HepG2 (cell line): ENCODE measurements at regions of chr10 and their contacts with region 1.

Region 1: DNA sequence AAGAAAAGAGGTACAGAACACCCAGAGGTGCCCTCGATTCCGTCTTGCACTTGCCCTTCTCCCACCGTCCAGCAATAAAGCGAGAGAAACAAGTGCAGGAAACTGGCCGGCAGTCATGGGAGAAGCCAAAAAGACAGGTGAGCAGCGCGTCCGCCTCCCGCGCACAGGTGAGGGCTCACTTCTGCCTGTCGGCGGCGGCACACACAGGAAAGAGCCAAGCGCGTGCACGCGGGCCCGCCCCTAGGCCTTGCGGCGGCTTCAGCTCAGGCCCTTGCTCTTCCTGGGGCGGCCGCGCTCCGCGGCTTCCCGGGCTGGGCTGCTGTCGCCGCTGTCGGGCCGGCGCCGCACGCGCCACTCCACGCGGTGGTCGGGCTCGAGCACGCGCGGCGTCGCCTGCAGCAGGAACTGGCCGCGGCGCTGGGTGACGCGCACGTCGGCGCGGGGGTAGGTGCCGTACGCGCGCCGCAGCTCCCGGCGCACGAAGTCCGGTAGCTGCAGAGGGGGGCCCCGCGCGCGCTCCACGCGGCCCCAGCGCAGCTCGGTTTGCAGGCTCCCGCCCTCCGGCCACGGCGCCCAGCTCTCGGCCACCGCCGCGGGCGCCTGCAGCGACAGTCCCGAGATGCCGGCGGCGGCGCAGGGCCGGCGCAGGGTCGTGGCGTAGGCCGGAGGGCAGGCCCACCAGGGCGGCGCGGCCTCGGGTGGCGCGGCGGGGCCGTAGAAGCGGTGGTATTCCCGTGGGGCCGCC is 977 bp downstream of the C10orf95 start:
- DNase-seq: peak; percentile 75
- ATAC-seq: peak; percentile 89
- H3K4me3 ChIP-seq: peak overlapping the region; percentile 64 to 96 (median 72)
- H3K27ac ChIP-seq: peak overlapping the region; percentile 82
- H3K4me1 ChIP-seq: peaks cover 28% of the 10 kb centered on the region
- H3K27me3 ChIP-seq: no peaks in the 10 kb centered on the region; a peak in 1 of 5 replicates
- CTCF ChIP-seq: no peak; the same call in 1 of the 2 replicates
- EP300 ChIP-seq: no peak
- POLR2A ChIP-seq: peak; percentile 52 to 64; a peak in 3 of 4 replicates
- RAD21 ChIP-seq: peak; percentile 76

Region 2: GRCh38 chr10:102432162-102432950 is 18.0 kb before region 1 on chr10 and contains the start of gene CUEDC2:
- CTCF ChIA-PET with region 1: no interaction called
- POLR2A ChIA-PET with region 1: interaction called, 112 read pairs
- in situ Hi-C with region 1: no loop called
- intact Hi-C with region 1: loop called (anchors 2 kb)
- DNase-seq: peak; percentile 89
- ATAC-seq: peak; percentile 78
- H3K4me3 ChIP-seq: peak within 1 kb of the TSS; percentile 74 to 92 (median 91)
- H3K27ac ChIP-seq: peak within 1 kb of the TSS; percentile 72
- H3K4me1 ChIP-seq: peaks cover 35% of the 10 kb centered on the region
- H3K27me3 ChIP-seq: no peaks in the 10 kb centered on the region; a peak in 1 of 5 replicates
- CTCF ChIP-seq: 0 out of 2 replicates have a peak, but pooled peaks have one; percentile 46
- EP300 ChIP-seq: 0 out of 4 replicates have a peak, but pooled peaks of 1 of the 2 experiments have one; percentile 17
- POLR2A ChIP-seq: peak; percentile 67 to 81
- RAD21 ChIP-seq: 0 out of 2 replicates have a peak, but pooled peaks have one; percentile 40
- total RNA-seq, gene CUEDC2: 13.0 and 13.1 TPM in 2 replicates

Region 3: GRCh38 chr10:102476466-102477141 is 26.2 kb after region 1 on chr10:
- CTCF ChIA-PET with region 1: no interaction called
- POLR2A ChIA-PET with region 1: interaction called, 3 read pairs
- in situ Hi-C with region 1: no loop called
- intact Hi-C with region 1: loop called (anchors 2 kb)
- DNase-seq: no peak
- ATAC-seq: no peak
- H3K4me3 ChIP-seq: no peak overlapping the region
- H3K27ac ChIP-seq: no peak overlapping the region
- H3K4me1 ChIP-seq: no peaks in the 10 kb centered on the region
- H3K27me3 ChIP-seq: no peaks in the 10 kb centered on the region
- CTCF ChIP-seq: no peak
- EP300 ChIP-seq: no peak
- POLR2A ChIP-seq: no peak
- RAD21 ChIP-seq: no peak

Region 4: GRCh38 chr10:102492983-102493382 is 42.6 kb after region 1 on chr10:
- CTCF ChIA-PET with region 1: no interaction called
- POLR2A ChIA-PET with region 1: no interaction called
- in situ Hi-C with region 1: no loop called
- intact Hi-C with region 1: no loop called
- DNase-seq: no peak
- ATAC-seq: no peak
- H3K4me3 ChIP-seq: no peak overlapping the region
- H3K27ac ChIP-seq: no peak overlapping the region
- H3K4me1 ChIP-seq: peaks cover 13% of the 10 kb centered on the region; the same call in 1 of the 2 replicates
- H3K27me3 ChIP-seq: no peaks in the 10 kb centered on the region
- CTCF ChIP-seq: no peak
- EP300 ChIP-seq: no peak
- POLR2A ChIP-seq: no peak
- RAD21 ChIP-seq: no peak